Stomach (tissue), 19 donors: ENCODE measurements at regions of chr1 and their contacts with region 1.

Region 1: GRCh38 chr1:220089650-220090556 is at the start of gene BPNT1:
- DNase-seq: peak; percentile 98 to 99
- H3K4me3 ChIP-seq: peak within 1 kb of the TSS; percentile 54 to 63 (median 60)
- H3K27ac ChIP-seq: peak within 1 kb of the TSS; percentile 74 to 85 (median 75)
- H3K4me1 ChIP-seq: peaks cover 6 to 37% (median 18%) of the 10 kb centered on the region in 4 donors
- H3K27me3 ChIP-seq: no peaks in the 10 kb centered on the region
- CTCF ChIP-seq: peak in 1 of 7 experiments; percentile 14
- EP300 ChIP-seq: no peak
- POLR2A ChIP-seq: no peak
- total RNA-seq, gene BPNT1: 7.0 to 23.5 (median 21.0) TPM

Region 2: DNA sequence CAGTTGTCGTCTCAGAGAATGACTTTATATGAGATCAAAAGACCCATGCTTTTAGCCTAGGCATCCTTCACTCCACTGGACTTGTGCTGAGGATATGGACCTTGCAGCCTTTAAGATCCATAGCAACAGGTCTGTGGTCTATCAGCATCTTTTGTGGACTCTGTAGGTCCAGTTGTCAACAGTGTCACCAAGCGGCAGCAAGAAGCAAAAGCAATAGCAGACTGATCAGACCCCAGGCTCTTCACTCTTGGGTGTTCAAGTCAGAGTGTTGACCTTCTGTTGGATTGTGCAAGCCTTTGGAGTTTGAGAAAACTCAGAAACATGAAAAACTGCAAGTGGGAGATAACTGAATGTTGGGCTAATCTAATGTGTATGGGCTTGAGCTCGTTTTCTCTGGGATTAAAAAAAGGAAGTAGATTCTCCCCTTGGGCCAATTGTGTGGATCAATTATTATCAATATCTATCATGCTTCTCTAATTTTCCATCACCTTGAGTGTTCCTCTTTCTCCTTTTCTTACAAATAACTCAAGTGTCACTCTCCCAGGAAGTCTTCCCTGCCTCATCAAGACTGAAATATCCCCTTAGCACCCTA is 772.0 kb before region 1 on chr1:
- intact Hi-C with region 1: no loop called
- DNase-seq: peak in 1 of 2 donors; percentile 30
- H3K4me3 ChIP-seq: no peak overlapping the region
- H3K27ac ChIP-seq: no peak overlapping the region
- H3K4me1 ChIP-seq: no peaks in the 10 kb centered on the region
- H3K27me3 ChIP-seq: no peaks in the 10 kb centered on the region
- CTCF ChIP-seq: no peak
- EP300 ChIP-seq: no peak
- POLR2A ChIP-seq: no peak

Region 3: GRCh38 chr1:219621047-219621786 is 468.7 kb before region 1 on chr1:
- intact Hi-C with region 1: no loop called
- DNase-seq: no peak
- H3K4me3 ChIP-seq: no peak overlapping the region
- H3K27ac ChIP-seq: no peak overlapping the region
- H3K4me1 ChIP-seq: no peaks in the 10 kb centered on the region
- H3K27me3 ChIP-seq: no peaks in the 10 kb centered on the region
- CTCF ChIP-seq: no peak
- EP300 ChIP-seq: no peak
- POLR2A ChIP-seq: no peak

Region 4: GRCh38 chr1:220046052-220046930 is 43.6 kb before region 1 on chr1 and contains the start of gene EPRS1:
- intact Hi-C with region 1: loop called (anchors 5 kb)
- DNase-seq: peak; percentile 94 to 99
- H3K4me3 ChIP-seq: peak within 1 kb of the TSS; percentile 79 to 90 (median 88)
- H3K27ac ChIP-seq: peak within 1 kb of the TSS; percentile 86 to 93 (median 89)
- H3K4me1 ChIP-seq: peaks cover 0 to 34% (median 25%) of the 10 kb centered on the region in 4 donors
- H3K27me3 ChIP-seq: no peaks in the 10 kb centered on the region
- CTCF ChIP-seq: peak in 5 of 7 experiments; percentile 75 to 92 (median 86)
- EP300 ChIP-seq: no peak
- POLR2A ChIP-seq: peak in 1 of 4 donors; percentile 9
- total RNA-seq, gene EPRS1: 15.8 to 89.6 (median 37.5) TPM

Region 5: DNA sequence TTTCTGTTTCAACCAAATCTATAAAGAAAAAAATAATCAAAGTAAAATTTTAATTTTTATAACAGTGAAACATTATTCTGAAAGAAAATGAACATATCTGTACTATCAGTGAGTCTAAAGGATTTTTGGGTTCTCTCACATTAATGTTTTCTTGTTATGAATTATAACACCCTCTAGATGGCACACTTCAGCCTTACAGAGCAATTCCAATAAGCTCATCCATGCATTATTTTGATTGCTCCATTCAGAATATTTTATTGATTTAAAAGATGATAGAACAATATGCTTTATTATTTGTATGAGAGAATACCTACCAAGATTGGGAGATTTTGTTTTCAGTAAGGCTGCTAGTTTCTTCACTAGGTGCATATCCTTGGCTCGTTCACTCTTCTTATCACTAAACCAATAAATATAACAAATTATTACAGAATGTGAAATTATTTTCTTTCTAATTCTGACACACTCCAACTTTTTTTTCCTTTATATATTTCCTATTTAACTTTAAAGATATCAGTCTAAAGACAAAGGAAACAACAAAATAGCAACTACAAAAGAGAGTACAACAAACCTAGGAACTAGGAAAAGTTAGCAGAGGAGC is 99.9 kb after region 1 on chr1:
- intact Hi-C with region 1: no loop called
- DNase-seq: peak in 1 of 2 donors; percentile 46
- H3K4me3 ChIP-seq: no peak overlapping the region
- H3K27ac ChIP-seq: no peak overlapping the region
- H3K4me1 ChIP-seq: no peaks in the 10 kb centered on the region
- H3K27me3 ChIP-seq: no peaks in the 10 kb centered on the region
- CTCF ChIP-seq: peak in 2 of 7 experiments; percentile 10 to 23
- EP300 ChIP-seq: no peak
- POLR2A ChIP-seq: no peak